PC-9 (cell line): ENCODE measurements at regions of chr11 and their contacts with region 1.

Region 1: GRCh38 chr11:10938650-10939387 is 81.0 kb upstream of the ZBED5 start:
- DNase-seq: no peak
- H3K4me3 ChIP-seq: no peak overlapping the region
- H3K27ac ChIP-seq: no peak overlapping the region
- H3K4me1 ChIP-seq: no peaks in the 10 kb centered on the region
- H3K27me3 ChIP-seq: no peaks in the 10 kb centered on the region
- CTCF ChIP-seq: no peak

Region 2: DNA sequence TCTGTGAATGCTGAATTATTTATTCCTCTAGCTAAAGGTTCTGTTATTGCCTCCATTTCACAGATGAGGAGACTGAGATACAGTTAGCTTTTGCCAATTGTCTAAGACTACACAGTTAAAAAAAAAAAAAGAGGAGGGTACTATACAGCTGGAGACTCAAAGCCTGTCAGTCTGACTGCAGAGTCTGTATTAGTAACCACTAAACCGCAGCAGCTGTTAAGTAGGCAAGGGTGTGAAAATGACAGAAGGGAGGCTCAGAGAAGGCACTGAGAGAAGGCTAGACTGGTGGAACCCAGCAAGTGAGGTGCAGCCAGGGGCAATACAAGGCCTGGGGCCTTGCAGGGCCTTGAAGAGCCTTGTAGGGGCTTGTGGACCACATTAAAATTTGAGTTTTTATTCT is 233.0 kb after region 1 on chr11:
- CTCF ChIA-PET with region 1: no interaction called
- POLR2A ChIA-PET with region 1: interaction called, 11 read pairs
- intact Hi-C with region 1: no loop called
- DNase-seq: no peak
- H3K4me3 ChIP-seq: no peak overlapping the region
- H3K27ac ChIP-seq: no peak overlapping the region
- H3K4me1 ChIP-seq: no peaks in the 10 kb centered on the region
- H3K27me3 ChIP-seq: no peaks in the 10 kb centered on the region
- CTCF ChIP-seq: no peak